CD8-positive, alpha-beta T cell (primary cell): ENCODE measurements at regions of chr14 and their contacts with region 1.

Region 1: GRCh38 chr14:105398044-105398725 is at the start of gene TEX22:
- DNase-seq: peak; percentile 73 to 97 (median 90)
- ATAC-seq: peak; percentile 90
- H3K4me3 ChIP-seq: peak within 1 kb of the TSS; percentile 63 to 76
- H3K4me3 Mint-ChIP-seq: peak within 1 kb of the TSS; percentile 79
- H3K27ac ChIP-seq: peak within 1 kb of the TSS; percentile 71
- H3K27ac Mint-ChIP-seq: peak within 1 kb of the TSS; percentile 78
- H3K4me1 ChIP-seq: peaks cover 22% of the 10 kb centered on the region
- H3K4me1 Mint-ChIP-seq: peaks cover 15% of the 10 kb centered on the region
- H3K27me3 ChIP-seq: no peaks in the 10 kb centered on the region
- H3K27me3 Mint-ChIP-seq: no peaks in the 10 kb centered on the region
- CTCF ChIP-seq: no peak
- total RNA-seq, gene TEX22: 1.1 TPM in 1 of 2 experiments, not detected in the other

Region 2: GRCh38 chr14:105414456-105415371 is 16.5 kb after region 1 on chr14:
- CTCF ChIA-PET with region 1: interaction called, 9 read pairs
- POLR2A ChIA-PET with region 1: interaction called, 4 read pairs
- intact Hi-C with region 1: loop called (anchors 1 kb)
- DNase-seq: peak; percentile 27 to 79 (median 57)
- ATAC-seq: peak; percentile 82
- H3K4me3 ChIP-seq: peak overlapping the region; percentile 24 to 69
- H3K4me3 Mint-ChIP-seq: peak overlapping the region; percentile 80
- H3K27ac ChIP-seq: no peak overlapping the region
- H3K27ac Mint-ChIP-seq: no peak overlapping the region
- H3K4me1 ChIP-seq: peaks cover 26% of the 10 kb centered on the region
- H3K4me1 Mint-ChIP-seq: peaks cover 14% of the 10 kb centered on the region
- H3K27me3 ChIP-seq: peaks cover 4 to 12% of the 10 kb centered on the region in 2 experiments
- H3K27me3 Mint-ChIP-seq: peaks cover 9% of the 10 kb centered on the region
- CTCF ChIP-seq: peak; percentile 92

Region 3: DNA sequence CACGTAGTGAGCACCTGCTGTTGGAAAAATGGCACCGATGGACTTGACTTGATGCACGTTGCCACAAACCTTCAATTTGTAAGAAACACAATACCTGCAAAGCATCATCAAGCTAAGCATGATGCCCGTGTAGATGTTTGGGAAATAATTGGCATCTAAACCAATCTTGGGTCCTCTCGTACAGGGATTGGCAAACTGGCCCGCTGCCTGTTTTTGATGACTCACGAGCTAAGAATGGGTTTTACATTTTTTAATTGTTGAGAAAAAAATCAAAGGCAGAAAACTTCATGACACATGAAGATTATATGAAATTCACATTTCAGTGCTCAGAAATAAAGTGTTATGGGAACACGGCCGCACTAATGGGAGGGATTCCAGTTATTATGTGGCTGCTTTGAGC is 32.4 kb after region 1 on chr14:
- CTCF ChIA-PET with region 1: no interaction called
- POLR2A ChIA-PET with region 1: no interaction called
- intact Hi-C with region 1: no loop called
- DNase-seq: no peak
- ATAC-seq: no peak
- H3K4me3 ChIP-seq: no peak overlapping the region
- H3K4me3 Mint-ChIP-seq: no peak overlapping the region
- H3K27ac ChIP-seq: no peak overlapping the region
- H3K27ac Mint-ChIP-seq: no peak overlapping the region
- H3K4me1 ChIP-seq: no peaks in the 10 kb centered on the region
- H3K4me1 Mint-ChIP-seq: peaks cover 18% of the 10 kb centered on the region
- H3K27me3 ChIP-seq: no peaks in the 10 kb centered on the region
- H3K27me3 Mint-ChIP-seq: no peaks in the 10 kb centered on the region
- CTCF ChIP-seq: no peak